ENCODE measurements at regions of chr3 and their contacts with region 1.

Region 1: DNA sequence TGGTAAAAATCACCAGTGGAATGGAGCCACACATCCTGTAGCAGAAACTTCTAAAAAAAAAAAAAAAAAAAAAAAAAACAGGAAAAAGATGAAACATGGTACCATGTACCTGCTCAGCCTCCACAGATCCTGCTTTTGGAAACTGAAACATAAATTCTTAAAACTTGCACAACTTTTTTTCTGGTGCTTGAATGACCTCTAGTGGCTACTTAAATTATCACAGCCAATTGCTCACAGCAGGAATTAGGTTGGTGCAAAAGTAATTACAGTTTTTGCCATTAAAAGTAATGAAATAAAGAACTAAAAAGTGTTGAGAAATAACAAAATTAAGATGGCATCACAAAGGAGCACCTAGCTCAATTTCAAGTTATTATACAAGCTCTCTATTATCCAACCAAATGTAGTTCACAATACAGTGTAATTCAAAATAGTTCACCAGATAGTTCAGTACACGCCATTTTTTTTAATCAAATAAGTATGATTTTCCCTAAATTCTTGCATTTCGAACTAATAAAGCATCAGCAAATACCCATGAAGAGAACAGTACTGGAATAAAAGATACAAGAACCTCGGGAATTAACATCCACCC is 80.6 kb downstream of the ULK4 start:
- DNase-seq: peak; percentile 63
- H3K4me3 ChIP-seq: no peak overlapping the region
- H3K27ac ChIP-seq: no peak overlapping the region
- H3K4me1 ChIP-seq: no peaks in the 10 kb centered on the region
- H3K27me3 ChIP-seq: no peaks in the 10 kb centered on the region

Region 2: DNA sequence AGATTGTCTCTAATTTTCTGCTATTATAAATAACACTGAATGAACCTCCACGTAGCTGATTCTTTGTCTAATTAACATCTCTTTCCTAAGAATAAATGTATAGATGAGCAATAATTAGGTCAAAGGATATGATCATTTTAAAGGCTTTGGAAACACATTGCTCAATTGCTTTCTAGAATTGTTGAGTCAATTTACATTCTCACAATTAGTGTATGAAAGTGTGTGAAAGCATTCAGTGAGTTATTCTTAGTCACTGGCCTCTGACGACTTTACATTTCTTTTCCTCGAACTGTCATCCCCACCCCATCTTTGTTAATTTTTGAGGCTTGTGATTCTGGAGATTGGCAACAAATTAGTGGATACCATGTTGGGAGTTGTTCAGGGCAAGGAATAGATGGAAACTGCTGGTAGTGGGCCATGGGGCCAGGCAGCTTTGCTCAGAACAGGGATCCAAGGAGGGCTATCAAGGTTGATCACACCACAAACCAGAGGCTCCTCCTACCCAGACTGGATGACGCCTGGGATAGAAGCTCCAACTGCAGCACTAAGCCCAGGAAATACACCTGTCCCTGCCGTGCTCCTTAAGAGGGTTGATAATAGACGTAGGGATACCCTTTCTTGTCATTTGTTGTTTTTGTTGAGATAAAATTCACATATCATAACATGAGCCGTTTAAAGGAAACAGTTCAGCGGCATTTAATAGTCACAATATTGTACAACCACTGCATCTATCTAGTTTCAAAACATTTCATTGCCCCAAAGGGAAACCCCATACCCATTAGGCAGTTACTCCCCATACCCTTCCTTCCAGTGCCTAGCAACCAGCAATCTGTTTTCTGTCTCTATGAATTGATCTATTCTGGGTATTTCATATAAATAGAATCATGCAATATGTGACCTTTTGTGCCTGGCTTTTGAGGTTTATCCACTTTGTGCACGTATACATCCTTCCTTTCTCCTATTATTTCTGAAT is 1543.9 kb before region 1 on chr3:
- in situ Hi-C with region 1: loop called (anchors 25 kb)
- DNase-seq: peak; percentile 43
- H3K4me3 ChIP-seq: no peak overlapping the region
- H3K27ac ChIP-seq: no peak overlapping the region
- H3K4me1 ChIP-seq: no peaks in the 10 kb centered on the region
- H3K27me3 ChIP-seq: no peaks in the 10 kb centered on the region

Region 3: DNA sequence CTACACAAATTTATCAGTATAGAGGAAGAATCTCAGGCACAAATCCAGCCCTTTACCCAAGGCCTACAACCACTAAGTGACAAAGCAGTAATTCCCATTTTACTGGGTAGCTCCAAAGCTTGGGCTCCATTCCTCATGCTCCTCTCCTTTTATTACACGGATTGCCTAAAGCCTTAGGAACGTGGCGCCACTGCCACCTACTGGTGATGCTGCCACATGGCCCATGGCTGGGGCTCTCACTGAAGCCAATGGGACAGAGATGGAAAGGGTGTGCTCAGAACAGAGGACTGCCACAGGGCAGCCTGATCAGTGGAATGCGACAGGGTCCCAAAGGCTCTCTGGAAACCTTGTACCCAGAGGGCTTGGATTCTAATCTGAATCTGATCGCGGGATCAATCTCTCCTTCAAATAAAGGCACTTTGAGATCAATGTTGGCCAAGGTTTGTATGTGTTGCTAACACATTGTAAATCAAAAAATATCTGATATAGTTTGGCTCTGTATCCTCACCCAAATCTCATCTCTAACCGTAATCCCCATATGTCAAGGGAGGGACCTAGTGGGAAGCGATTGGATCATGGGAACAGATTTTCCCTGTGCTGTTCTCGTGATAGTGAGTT is 562.6 kb after region 1 on chr3:
- in situ Hi-C with region 1: loop called (anchors 25 kb)
- DNase-seq: peak; percentile 85
- H3K4me3 ChIP-seq: no peak overlapping the region
- H3K27ac ChIP-seq: no peak overlapping the region
- H3K4me1 ChIP-seq: no peaks in the 10 kb centered on the region
- H3K27me3 ChIP-seq: peaks cover 34% of the 10 kb centered on the region

Region 4: GRCh38 chr3:42772670-42773408 is 891.5 kb after region 1 on chr3 and contains the start of gene CCDC13:
- in situ Hi-C with region 1: no loop called
- DNase-seq: peak; percentile 94
- H3K4me3 ChIP-seq: peak within 1 kb of the TSS; percentile 87
- H3K27ac ChIP-seq: peak within 1 kb of the TSS; percentile 24
- H3K4me1 ChIP-seq: peaks cover 6% of the 10 kb centered on the region; the same call in 1 of the 2 replicates
- H3K27me3 ChIP-seq: no peaks in the 10 kb centered on the region
- total RNA-seq, gene CCDC13: 0.22 and 1.3 TPM in 2 replicates

Measured in GM23248 (cell line).